MCF 10A (cell line): ENCODE measurements at regions of chr7 and their contacts with region 1.

Region 1: DNA sequence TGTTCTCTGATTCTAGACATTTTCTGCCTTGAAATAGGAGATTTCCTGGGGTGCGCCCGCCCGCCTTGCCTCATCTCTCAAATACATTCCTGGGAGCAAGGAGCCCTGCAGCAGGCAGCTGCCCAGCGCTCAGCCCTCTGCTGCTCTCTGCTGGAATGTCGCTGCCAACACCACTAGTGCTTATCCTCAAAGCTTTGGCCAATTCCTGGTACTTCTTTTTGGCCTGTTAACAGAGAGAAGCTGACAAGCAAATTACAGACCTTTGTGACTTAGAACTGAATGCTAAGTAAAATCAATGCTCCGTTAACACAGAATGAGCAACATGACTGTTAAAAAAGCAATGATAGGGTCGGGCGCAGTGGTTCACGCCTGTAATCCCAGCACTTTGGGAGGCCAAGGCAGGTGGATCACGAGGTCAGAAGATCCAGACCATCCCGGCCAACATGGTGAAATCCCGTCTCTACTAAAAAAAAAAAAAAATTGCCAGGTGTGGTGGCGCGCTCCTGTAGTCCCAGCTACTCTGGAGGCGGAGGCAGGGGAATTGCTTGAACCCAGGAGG is 41.9 kb upstream of the SYPL1 start:
- DNase-seq: peak; percentile 86
- H3K4me3 Mint-ChIP-seq: no peak overlapping the region
- H3K27ac Mint-ChIP-seq: no peak overlapping the region
- H3K4me1 Mint-ChIP-seq: no peaks in the 10 kb centered on the region
- H3K27me3 Mint-ChIP-seq: peaks cover 18% of the 10 kb centered on the region
- CTCF ChIP-seq: peak; percentile 92

Region 2: DNA sequence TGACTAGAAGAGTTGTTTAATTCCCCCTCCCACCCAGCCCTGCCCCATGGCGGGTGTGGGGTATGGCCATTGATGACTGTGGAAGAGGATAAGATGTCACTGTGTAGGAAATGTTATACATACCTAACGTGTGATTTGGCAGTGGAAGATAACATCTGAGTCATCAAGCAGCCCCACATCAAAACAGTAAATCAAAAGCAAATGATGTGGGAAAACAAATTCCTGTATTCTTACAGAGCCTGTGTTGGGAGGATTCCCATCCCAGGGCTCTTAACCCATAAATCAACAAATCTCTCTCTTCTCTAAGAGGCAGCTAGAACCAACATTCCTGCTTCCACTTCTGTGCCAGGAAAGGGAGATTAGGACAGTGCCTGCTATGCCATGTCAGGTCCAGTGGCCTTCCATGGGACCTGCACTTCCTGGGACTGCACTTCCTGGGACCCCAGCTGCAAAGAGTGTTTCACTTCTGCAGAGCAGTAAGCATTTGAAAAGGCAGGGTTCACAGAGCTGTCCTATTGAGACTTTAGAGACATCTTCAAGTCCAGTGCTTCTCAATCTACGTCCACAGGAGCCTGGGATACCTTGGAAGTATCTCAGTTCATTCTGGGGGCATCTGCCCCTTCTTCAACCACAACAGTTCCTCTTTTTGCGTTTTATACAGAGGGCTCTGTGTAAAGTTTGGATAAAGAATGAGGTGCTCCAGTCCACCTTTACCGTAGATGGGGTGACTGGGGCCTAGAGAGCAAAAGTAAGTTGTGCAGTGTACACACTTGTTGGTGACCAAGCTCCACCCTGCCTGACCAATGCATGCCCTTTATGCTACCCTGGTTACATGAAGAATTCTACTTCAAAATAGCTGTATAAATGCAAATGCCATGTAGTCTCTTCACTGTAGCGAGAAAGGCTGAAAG is 323.3 kb before region 1 on chr7:
- CTCF ChIA-PET with region 1: no interaction called
- POLR2A ChIA-PET with region 1: no interaction called
- intact Hi-C with region 1: no loop called
- DNase-seq: peak; percentile 85
- H3K4me3 Mint-ChIP-seq: no peak overlapping the region
- H3K27ac Mint-ChIP-seq: no peak overlapping the region
- H3K4me1 Mint-ChIP-seq: peaks cover 26% of the 10 kb centered on the region
- H3K27me3 Mint-ChIP-seq: no peaks in the 10 kb centered on the region
- CTCF ChIP-seq: no peak

Region 3: GRCh38 chr7:105876091-105876963 is 277.6 kb before region 1 on chr7 and contains the start of gene ATXN7L1:
- CTCF ChIA-PET with region 1: no interaction called
- POLR2A ChIA-PET with region 1: no interaction called
- intact Hi-C with region 1: loop called (anchors 5 kb)
- DNase-seq: peak; percentile 98
- H3K4me3 Mint-ChIP-seq: peak within 1 kb of the TSS; percentile 87
- H3K27ac Mint-ChIP-seq: peak within 1 kb of the TSS; percentile 97
- H3K4me1 Mint-ChIP-seq: peaks cover 5% of the 10 kb centered on the region
- H3K27me3 Mint-ChIP-seq: no peaks in the 10 kb centered on the region
- CTCF ChIP-seq: peak; percentile 50
- total RNA-seq, gene ATXN7L1: 8.1 and 10.0 TPM in 2 replicates

Region 4: GRCh38 chr7:106056513-106057203 is 97.3 kb before region 1 on chr7:
- CTCF ChIA-PET with region 1: interaction called, 187 read pairs
- POLR2A ChIA-PET with region 1: interaction called, 45 read pairs
- intact Hi-C with region 1: loop called (anchors 1 kb)
- DNase-seq: peak; percentile 85
- H3K4me3 Mint-ChIP-seq: no peak overlapping the region
- H3K27ac Mint-ChIP-seq: no peak overlapping the region
- H3K4me1 Mint-ChIP-seq: peaks cover 21% of the 10 kb centered on the region
- H3K27me3 Mint-ChIP-seq: no peaks in the 10 kb centered on the region
- CTCF ChIP-seq: peak; percentile 94

Region 5: DNA sequence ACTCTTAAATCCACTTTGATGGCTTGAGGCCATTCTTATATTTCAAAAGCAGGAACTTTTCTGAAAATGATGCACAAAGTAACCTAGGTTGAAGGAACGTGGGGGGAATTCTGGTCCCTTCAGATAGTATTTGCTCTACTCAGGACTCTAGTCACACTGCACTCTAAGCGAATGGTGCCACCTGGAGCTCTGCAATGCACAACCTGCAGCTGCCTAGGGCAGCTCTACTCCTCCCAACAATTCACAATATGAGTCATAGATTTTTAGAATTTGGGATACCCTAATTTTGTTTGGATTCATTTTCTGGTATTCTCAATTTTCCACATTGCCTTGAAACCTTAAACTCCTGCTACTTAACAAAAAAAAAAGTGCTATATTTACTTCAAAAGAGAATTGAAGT is 59.2 kb before region 1 on chr7:
- CTCF ChIA-PET with region 1: interaction called, 17 read pairs
- POLR2A ChIA-PET with region 1: interaction called, 3 read pairs
- intact Hi-C with region 1: no loop called
- DNase-seq: peak; percentile 23
- H3K4me3 Mint-ChIP-seq: no peak overlapping the region
- H3K27ac Mint-ChIP-seq: no peak overlapping the region
- H3K4me1 Mint-ChIP-seq: peaks cover 11% of the 10 kb centered on the region
- H3K27me3 Mint-ChIP-seq: no peaks in the 10 kb centered on the region
- CTCF ChIP-seq: no peak

Region 6: GRCh38 chr7:106134241-106134640 is 19.7 kb before region 1 on chr7:
- CTCF ChIA-PET with region 1: interaction called, 14 read pairs
- POLR2A ChIA-PET with region 1: no interaction called
- intact Hi-C with region 1: no loop called
- DNase-seq: no peak
- H3K4me3 Mint-ChIP-seq: no peak overlapping the region
- H3K27ac Mint-ChIP-seq: no peak overlapping the region
- H3K4me1 Mint-ChIP-seq: no peaks in the 10 kb centered on the region
- H3K27me3 Mint-ChIP-seq: no peaks in the 10 kb centered on the region
- CTCF ChIP-seq: no peak